Caco-2 (cell line): ENCODE measurements at regions of chr22 and their contacts with region 1.

Region 1: GRCh38 chr22:31272522-31273446 is 19.5 kb downstream of the PIK3IP1 start:
- DNase-seq: peak; percentile 60 to 73
- H3K4me3 ChIP-seq: no peak overlapping the region
- H3K4me3 Mint-ChIP-seq: no peak overlapping the region
- H3K27ac Mint-ChIP-seq: no peak overlapping the region
- H3K4me1 ChIP-seq: peaks cover 30% of the 10 kb centered on the region
- H3K4me1 Mint-ChIP-seq: peaks cover 23% of the 10 kb centered on the region
- H3K27me3 ChIP-seq: no peaks in the 10 kb centered on the region
- H3K27me3 Mint-ChIP-seq: no peaks in the 10 kb centered on the region
- CTCF ChIP-seq: peak; percentile 66

Region 2: GRCh38 chr22:31055635-31056159 is 217.1 kb before region 1 on chr22:
- CTCF ChIA-PET with region 1: no interaction called
- POLR2A ChIA-PET with region 1: no interaction called
- intact Hi-C with region 1: no loop called
- DNase-seq: peak; percentile 93 to 96
- H3K4me3 ChIP-seq: no peak overlapping the region
- H3K4me3 Mint-ChIP-seq: peak overlapping the region; percentile 42
- H3K27ac Mint-ChIP-seq: peak overlapping the region; percentile 91
- H3K4me1 ChIP-seq: peaks cover 26% of the 10 kb centered on the region
- H3K4me1 Mint-ChIP-seq: peaks cover 11% of the 10 kb centered on the region
- H3K27me3 ChIP-seq: no peaks in the 10 kb centered on the region
- H3K27me3 Mint-ChIP-seq: no peaks in the 10 kb centered on the region
- CTCF ChIP-seq: no peak

Region 3: DNA sequence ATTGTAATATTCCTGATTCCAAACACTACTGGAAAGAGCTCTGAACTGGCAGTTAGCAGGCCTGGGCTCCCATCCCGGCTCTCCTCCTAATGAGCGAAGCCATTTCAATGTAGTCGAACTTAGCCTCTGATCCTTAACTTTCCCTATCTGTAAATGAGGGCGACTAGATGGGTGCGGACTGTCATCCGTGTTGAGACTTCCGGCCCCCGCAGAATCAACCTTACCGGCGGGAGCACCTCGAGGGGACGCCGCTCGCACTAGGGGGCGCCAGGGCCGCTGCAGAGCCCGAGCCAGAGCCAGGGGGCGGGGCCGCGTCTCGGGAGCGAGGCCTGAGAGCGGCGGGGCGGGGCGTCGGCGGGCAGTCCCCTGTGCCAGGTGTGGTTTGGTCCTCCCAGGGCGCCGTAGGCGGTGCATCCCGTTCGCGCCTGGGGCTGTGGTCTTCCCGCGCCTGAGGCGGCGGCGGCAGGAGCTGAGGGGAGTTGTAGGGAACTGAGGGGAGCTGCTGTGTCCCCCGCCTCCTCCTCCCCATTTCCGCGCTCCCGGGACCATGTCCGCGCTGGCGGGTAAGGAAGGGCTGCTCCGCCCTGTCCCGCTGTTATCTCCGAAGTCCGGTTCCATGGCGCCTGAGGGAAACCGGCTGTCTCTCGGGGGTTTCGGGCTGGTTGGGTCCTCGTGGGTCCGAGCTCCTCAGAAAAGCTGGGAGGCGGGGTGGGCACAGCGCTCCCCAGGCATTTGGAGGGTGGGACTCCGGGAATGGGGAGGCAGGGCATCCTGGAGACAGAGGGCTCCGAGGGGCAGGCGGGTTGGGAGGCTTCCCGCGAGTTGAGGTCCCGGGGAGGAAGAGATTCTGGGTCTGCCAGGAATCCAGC is 60.7 kb before region 1 on chr22 and contains the start of gene LIMK2:
- CTCF ChIA-PET with region 1: interaction called, 42 read pairs
- POLR2A ChIA-PET with region 1: interaction called, 3 read pairs
- intact Hi-C with region 1: loop called (anchors 1 kb)
- DNase-seq: peak; percentile 93 to 97
- H3K4me3 ChIP-seq: peak within 1 kb of the TSS; percentile 81
- H3K4me3 Mint-ChIP-seq: peak within 1 kb of the TSS; percentile 83
- H3K27ac Mint-ChIP-seq: peak within 1 kb of the TSS; percentile 82
- H3K4me1 ChIP-seq: peaks cover 38% of the 10 kb centered on the region
- H3K4me1 Mint-ChIP-seq: peaks cover 26% of the 10 kb centered on the region
- H3K27me3 ChIP-seq: no peaks in the 10 kb centered on the region
- H3K27me3 Mint-ChIP-seq: no peaks in the 10 kb centered on the region
- CTCF ChIP-seq: peak; percentile 76 to 90
- total RNA-seq, gene LIMK2: 34.8 and 36.3 TPM in 2 replicates

Region 4: DNA sequence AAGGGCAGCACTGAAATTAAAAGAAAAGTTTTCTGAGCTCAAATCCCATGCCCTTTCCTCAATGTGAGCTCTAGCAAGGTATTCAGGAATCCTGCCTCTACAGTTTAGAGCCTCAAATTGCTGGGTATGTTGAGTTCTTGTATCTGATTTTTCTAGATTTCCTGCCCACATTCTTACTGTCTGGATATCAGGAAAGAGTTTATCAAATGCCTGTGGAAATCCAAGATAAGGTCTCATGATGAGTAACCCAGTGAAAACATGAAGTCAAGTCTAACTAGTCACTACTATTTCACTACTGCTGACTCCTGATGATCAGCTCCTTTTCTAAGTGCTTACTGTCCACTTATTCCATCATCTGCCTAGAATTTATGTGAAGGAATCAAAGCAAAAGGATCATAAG is 30.8 kb before region 1 on chr22:
- CTCF ChIA-PET with region 1: interaction called, 24 read pairs
- POLR2A ChIA-PET with region 1: interaction called, 5 read pairs
- intact Hi-C with region 1: loop called (anchors 2 kb)
- DNase-seq: no peak
- H3K4me3 ChIP-seq: no peak overlapping the region
- H3K4me3 Mint-ChIP-seq: no peak overlapping the region
- H3K27ac Mint-ChIP-seq: no peak overlapping the region
- H3K4me1 ChIP-seq: peaks cover 68% of the 10 kb centered on the region
- H3K4me1 Mint-ChIP-seq: peaks cover 37% of the 10 kb centered on the region
- H3K27me3 ChIP-seq: no peaks in the 10 kb centered on the region
- H3K27me3 Mint-ChIP-seq: no peaks in the 10 kb centered on the region
- CTCF ChIP-seq: no peak

Region 5: GRCh38 chr22:31248138-31248745 is 24.5 kb before region 1 on chr22:
- CTCF ChIA-PET with region 1: interaction called, 62 read pairs
- POLR2A ChIA-PET with region 1: interaction called, 5 read pairs
- intact Hi-C with region 1: no loop called
- DNase-seq: peak; percentile 74 to 82
- H3K4me3 ChIP-seq: peak overlapping the region; percentile 35
- H3K4me3 Mint-ChIP-seq: peak overlapping the region; percentile 63
- H3K27ac Mint-ChIP-seq: no peak overlapping the region
- H3K4me1 ChIP-seq: peaks cover 73% of the 10 kb centered on the region
- H3K4me1 Mint-ChIP-seq: peaks cover 25% of the 10 kb centered on the region
- H3K27me3 ChIP-seq: no peaks in the 10 kb centered on the region
- H3K27me3 Mint-ChIP-seq: no peaks in the 10 kb centered on the region
- CTCF ChIP-seq: no peak

Region 6: GRCh38 chr22:31253949-31254348 is 18.8 kb before region 1 on chr22:
- CTCF ChIA-PET with region 1: interaction called, 62 read pairs
- POLR2A ChIA-PET with region 1: interaction called, 5 read pairs
- intact Hi-C with region 1: loop called (anchors 2 kb)
- DNase-seq: peak; percentile 59 to 82
- H3K4me3 ChIP-seq: no peak overlapping the region
- H3K4me3 Mint-ChIP-seq: no peak overlapping the region
- H3K27ac Mint-ChIP-seq: no peak overlapping the region
- H3K4me1 ChIP-seq: peaks cover 46% of the 10 kb centered on the region
- H3K4me1 Mint-ChIP-seq: peaks cover 11% of the 10 kb centered on the region
- H3K27me3 ChIP-seq: no peaks in the 10 kb centered on the region
- H3K27me3 Mint-ChIP-seq: no peaks in the 10 kb centered on the region
- CTCF ChIP-seq: peak in 1 of 2 experiments; percentile 18